MCF 10A (cell line): ENCODE measurements at regions of chr13 and their contacts with region 1.

Region 1: DNA sequence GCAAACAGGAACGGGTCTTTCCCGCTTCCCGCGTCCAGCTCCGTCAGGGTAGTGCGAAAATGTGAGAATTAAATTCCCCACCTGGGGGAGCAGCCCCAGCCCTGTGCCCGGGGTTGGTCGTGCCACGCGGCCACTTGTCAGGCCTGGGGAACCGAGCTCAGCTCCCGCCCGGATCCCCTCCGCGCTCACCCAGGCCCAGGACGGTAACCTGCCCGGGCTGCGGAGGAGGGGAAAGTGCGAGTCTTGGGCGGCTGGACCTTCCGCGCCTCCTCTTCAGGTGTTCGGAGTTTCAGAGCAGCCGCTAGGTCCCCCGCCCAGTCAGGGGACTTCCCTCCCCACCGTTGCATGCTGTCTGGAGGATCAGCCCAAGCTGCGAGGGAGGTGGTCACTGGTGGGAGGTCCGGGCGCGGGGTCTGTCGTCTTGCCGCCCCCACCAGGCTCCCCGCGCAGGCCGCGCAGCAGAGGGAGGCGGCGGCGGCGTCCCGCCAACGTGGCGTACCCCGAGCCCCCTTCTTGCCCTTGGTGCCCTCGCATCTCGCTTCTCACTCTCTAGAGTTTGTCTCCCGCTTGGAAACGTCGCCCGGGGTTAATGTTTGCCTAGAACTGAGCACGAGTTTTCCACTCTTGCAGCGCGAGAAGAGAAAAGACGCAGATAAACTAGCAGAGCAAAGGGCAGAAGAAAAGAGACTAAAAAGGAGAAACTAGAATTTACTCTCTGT is 8.1 kb downstream of the URAD start:
- DNase-seq: no peak
- H3K4me3 Mint-ChIP-seq: no peak overlapping the region
- H3K27ac Mint-ChIP-seq: no peak overlapping the region
- H3K4me1 Mint-ChIP-seq: peaks cover 7% of the 10 kb centered on the region
- H3K27me3 Mint-ChIP-seq: peaks cover 77% of the 10 kb centered on the region
- CTCF ChIP-seq: no peak

Region 2: DNA sequence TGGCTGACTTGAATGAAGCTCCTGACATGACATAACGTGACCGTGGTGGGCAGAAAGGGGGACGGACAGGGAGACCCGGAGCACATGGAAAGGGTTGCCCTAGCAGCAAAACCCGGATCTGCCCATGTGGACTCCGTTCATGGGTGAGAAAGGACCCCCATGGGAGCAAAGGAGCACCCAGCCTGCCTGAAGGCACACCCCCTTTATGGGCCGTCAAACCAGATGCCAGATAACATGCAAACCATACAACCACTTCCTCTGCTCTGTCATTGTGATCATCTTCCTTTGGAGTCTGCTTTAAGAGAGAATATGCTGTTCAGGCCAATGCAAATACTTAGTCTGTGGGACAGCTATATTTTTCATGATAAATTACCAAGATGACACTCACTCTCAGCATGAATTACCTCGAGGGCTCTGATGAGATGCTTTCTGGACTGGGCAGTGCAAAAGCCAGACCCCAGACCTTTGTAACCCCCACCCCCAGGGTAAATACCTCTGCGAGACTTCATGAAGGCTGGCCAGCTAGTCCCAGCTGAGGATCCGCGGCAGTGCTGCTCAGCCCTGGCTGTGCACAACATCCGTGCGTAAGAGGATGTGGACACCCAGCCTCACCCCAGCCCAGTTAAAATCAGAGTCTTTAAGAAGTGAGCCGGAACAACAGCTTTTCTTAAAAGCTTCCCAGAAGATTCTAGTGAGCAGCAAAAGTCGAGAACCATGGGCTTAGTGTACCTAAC is 935.4 kb before region 1 on chr13:
- CTCF ChIA-PET with region 1: no interaction called
- POLR2A ChIA-PET with region 1: no interaction called
- intact Hi-C with region 1: no loop called
- DNase-seq: no peak
- H3K4me3 Mint-ChIP-seq: no peak overlapping the region
- H3K27ac Mint-ChIP-seq: no peak overlapping the region
- H3K4me1 Mint-ChIP-seq: peaks cover 14% of the 10 kb centered on the region
- H3K27me3 Mint-ChIP-seq: no peaks in the 10 kb centered on the region
- CTCF ChIP-seq: no peak

Region 3: DNA sequence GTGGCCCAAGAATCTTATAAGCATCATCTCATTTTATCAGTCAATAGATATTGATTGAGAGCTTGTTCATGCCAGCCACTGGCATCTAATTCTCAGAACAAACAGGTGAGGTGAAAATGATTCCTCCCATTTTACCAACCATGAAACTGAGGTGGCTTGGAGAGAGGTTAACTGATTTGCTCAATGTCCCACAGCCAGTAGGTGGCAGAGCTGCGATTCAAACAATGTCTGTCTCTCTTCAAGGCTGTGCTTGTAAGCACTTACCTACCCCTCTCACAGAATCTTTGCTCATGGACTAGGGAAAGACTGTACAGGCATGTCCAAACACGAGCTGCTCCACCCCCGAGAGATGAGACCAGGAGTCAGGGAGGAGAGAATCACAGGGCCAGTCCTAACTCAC is 209.6 kb before region 1 on chr13:
- CTCF ChIA-PET with region 1: interaction called, 4 read pairs
- POLR2A ChIA-PET with region 1: no interaction called
- intact Hi-C with region 1: loop called (anchors 5 kb)
- DNase-seq: peak; percentile 66
- H3K4me3 Mint-ChIP-seq: no peak overlapping the region
- H3K27ac Mint-ChIP-seq: no peak overlapping the region
- H3K4me1 Mint-ChIP-seq: peaks cover 6% of the 10 kb centered on the region
- H3K27me3 Mint-ChIP-seq: no peaks in the 10 kb centered on the region
- CTCF ChIP-seq: peak; percentile 45

Region 4: GRCh38 chr13:27792393-27793218 is 187.8 kb before region 1 on chr13 and contains the start of gene GSX1:
- CTCF ChIA-PET with region 1: no interaction called
- POLR2A ChIA-PET with region 1: no interaction called
- intact Hi-C with region 1: no loop called
- DNase-seq: no peak
- H3K4me3 Mint-ChIP-seq: peak within 1 kb of the TSS; percentile 78
- H3K27ac Mint-ChIP-seq: no peak within 1 kb of the TSS
- H3K4me1 Mint-ChIP-seq: peaks cover 22% of the 10 kb centered on the region
- H3K27me3 Mint-ChIP-seq: peaks cover 94% of the 10 kb centered on the region
- CTCF ChIP-seq: no peak
- total RNA-seq, gene GSX1: not detected in 2 replicates

Region 5: GRCh38 chr13:27839809-27840467 is 140.5 kb before region 1 on chr13:
- CTCF ChIA-PET with region 1: interaction called, 12 read pairs
- POLR2A ChIA-PET with region 1: interaction called, 3 read pairs
- intact Hi-C with region 1: no loop called
- DNase-seq: peak; percentile 63
- H3K4me3 Mint-ChIP-seq: no peak overlapping the region
- H3K27ac Mint-ChIP-seq: peak overlapping the region; percentile 72
- H3K4me1 Mint-ChIP-seq: peaks cover 7% of the 10 kb centered on the region
- H3K27me3 Mint-ChIP-seq: no peaks in the 10 kb centered on the region
- CTCF ChIP-seq: no peak